ENCODE measurements at regions of chr16 and their contacts with region 1.

Region 1: DNA sequence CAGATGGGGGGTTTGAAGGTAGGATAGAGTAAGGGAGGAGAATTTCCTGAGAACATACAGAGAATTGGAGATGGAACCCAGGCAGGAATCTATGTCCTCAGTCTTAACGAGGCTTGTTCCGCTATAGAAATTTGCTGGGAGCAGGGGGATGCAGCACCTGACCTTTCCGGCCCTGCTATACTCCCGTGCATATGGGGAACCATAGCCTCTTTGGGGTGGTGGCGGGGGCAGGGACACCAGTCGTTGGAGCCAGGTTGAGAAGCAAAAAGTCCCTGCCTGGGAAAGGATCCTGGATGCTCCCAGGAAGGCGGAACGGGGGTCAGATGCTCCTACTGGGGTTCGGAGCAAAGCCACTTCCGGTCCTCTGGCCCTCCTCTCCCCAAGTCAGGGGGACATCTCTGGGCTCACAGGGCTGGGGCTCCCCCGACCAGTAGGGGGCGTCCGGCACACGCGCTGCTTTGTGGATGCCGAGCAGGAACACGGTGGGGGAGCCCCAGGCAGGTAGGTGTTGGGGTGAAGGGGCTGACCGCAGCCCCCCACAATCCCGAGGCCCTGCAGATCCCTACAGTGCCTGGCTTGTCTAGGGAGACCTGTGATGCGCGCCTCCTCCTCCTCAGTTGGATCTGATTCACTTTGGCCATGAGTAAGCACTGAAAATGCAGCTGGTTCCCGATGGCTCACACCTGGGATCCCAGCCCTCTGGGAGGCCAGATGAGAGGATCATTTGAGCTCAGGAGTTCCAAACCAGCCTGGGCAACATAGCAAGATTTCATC is 15.5 kb upstream of the TFAP4 start:
- DNase-seq: peak; percentile 56 to 91 (median 84)
- ATAC-seq: peak; percentile 99
- H3K4me3 ChIP-seq: no peak overlapping the region
- H3K4me3 Mint-ChIP-seq: no peak overlapping the region
- H3K27ac ChIP-seq: no peak overlapping the region
- H3K27ac Mint-ChIP-seq: no peak overlapping the region
- H3K4me1 ChIP-seq: peaks cover 8% of the 10 kb centered on the region
- H3K4me1 Mint-ChIP-seq: peaks cover 13% of the 10 kb centered on the region
- H3K27me3 ChIP-seq: peaks cover 0 to 3% of the 10 kb centered on the region in 2 experiments
- H3K27me3 Mint-ChIP-seq: peaks cover 12% of the 10 kb centered on the region
- CTCF ChIP-seq: peak; percentile 95

Region 2: DNA sequence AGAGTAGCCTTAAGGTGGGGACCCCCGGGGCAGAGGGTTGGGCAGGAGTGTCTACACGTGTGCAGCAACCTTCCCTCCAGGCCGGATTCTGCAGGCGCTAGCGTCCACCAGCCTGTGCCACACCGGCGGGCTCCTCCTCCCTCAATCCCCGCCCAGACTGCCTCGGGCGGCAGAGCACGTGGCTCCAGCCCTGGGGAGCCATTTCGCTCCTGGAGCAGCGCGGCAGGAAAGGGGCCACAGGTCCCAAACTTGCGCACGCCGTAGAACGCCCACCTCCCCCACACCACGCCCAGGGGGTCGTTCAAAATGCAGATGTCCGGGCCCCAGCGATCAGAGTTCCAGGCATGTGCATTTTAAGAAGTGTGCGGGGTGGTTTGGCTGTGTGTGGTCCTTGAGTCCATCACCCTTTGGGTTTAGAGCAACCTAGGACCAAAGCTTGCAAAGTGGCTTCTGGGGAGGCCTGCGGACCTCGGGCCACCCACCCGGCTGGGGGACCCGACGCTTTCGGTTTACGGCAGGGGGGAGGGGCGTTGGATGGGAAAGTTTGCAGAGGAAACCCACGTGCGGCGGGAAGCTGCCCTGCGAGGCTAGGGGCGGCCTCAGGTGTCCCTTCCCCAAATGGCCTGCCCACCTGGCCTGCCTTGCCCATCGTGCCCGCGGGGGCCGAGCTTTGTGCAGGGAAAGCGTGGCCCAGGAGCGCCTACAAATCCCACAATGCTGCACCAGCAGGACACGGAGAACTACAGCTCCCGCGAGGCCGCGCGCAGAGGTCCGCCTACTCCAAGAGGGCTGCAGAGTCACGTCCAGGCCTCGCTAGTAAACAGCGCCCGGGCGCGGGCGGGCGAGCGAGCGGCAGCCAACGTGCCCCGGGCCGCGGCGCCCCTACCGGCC is 16.9 kb before region 1 on chr16:
- CTCF ChIA-PET with region 1: interaction called, 12 read pairs
- POLR2A ChIA-PET with region 1: interaction called, 6 read pairs
- intact Hi-C with region 1: loop called in 1 of 2 experiments (anchors 2 kb)
- DNase-seq: peak; percentile 72 to 93 (median 89)
- ATAC-seq: peak; percentile 84
- H3K4me3 ChIP-seq: peak overlapping the region; percentile 91 to 99
- H3K4me3 Mint-ChIP-seq: peak overlapping the region; percentile 88
- H3K27ac ChIP-seq: peak overlapping the region; percentile 50 to 76
- H3K27ac Mint-ChIP-seq: peak overlapping the region; percentile 57
- H3K4me1 ChIP-seq: peaks cover 13% of the 10 kb centered on the region
- H3K4me1 Mint-ChIP-seq: peaks cover 15% of the 10 kb centered on the region
- H3K27me3 ChIP-seq: no peaks in the 10 kb centered on the region
- H3K27me3 Mint-ChIP-seq: no peaks in the 10 kb centered on the region
- CTCF ChIP-seq: no peak

Region 3: DNA sequence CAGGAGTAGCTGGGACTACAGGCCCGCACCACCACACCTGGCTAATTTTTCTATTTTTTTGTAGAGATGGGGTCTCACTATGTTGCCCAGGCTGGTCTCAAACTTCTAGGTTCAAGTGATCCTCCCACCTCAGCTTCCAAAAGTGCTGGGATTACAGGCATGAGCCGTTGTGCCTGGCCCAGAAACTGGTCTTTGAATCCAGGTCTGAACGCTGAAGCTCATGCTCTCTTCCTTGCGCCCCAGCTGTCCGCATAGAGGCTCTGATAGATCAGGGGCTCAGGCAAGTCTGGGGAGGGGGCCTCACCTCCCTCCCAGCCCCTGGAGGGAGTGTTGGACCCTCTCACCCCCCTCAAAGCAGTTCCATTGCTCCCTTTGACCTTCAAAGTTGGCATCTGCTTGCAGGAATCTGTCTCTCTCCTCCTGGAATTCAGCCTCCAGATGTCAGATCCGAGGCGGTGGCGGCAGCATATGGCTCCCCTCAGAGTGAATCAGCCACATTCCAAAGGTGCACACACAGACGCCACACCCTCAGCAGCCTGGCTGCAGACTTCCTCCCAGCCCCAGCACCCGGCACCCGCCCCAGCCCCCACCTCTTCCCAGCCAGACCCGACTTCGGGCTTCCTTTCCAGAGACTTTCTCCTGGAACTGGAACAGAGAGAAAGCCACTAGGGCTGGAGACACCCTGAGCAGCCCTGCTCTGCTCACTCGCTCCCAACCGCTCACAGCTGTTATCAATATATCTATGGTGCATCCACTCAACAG is 10.6 kb after region 1 on chr16:
- CTCF ChIA-PET with region 1: interaction called, 21 read pairs
- POLR2A ChIA-PET with region 1: interaction called, 3 read pairs
- intact Hi-C with region 1: no loop called
- DNase-seq: no peak
- ATAC-seq: no peak
- H3K4me3 ChIP-seq: no peak overlapping the region
- H3K4me3 Mint-ChIP-seq: no peak overlapping the region
- H3K27ac ChIP-seq: no peak overlapping the region
- H3K27ac Mint-ChIP-seq: no peak overlapping the region
- H3K4me1 ChIP-seq: peaks cover 2% of the 10 kb centered on the region
- H3K4me1 Mint-ChIP-seq: peaks cover 2% of the 10 kb centered on the region
- H3K27me3 ChIP-seq: no peaks in the 10 kb centered on the region
- H3K27me3 Mint-ChIP-seq: no peaks in the 10 kb centered on the region
- CTCF ChIP-seq: no peak

Region 4: DNA sequence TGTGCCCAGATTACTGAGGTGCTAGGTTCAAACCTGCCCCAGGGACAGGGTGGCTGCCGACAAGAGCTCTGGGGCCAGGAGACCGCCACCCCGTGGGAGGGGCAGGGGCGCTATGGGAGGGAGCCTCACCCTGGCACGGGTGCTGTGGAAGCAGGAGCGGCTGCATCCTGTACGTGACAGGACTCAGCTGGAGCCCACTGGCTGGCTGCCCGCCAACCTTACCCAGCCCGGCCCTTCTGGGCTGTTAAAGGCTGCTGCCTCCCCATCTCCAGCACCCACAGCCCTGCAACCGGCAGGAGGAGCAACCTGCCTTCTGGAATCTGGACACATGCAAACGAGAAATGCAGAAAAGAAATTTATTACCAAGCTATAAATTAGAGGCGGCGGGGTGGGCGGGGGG is 51.6 kb after region 1 on chr16:
- CTCF ChIA-PET with region 1: interaction called, 169 read pairs
- POLR2A ChIA-PET with region 1: no interaction called
- intact Hi-C with region 1: no loop called
- DNase-seq: peak in 1 of 9 experiments; percentile 5
- ATAC-seq: no peak
- H3K4me3 ChIP-seq: no peak overlapping the region
- H3K4me3 Mint-ChIP-seq: no peak overlapping the region
- H3K27ac ChIP-seq: no peak overlapping the region
- H3K27ac Mint-ChIP-seq: no peak overlapping the region
- H3K4me1 ChIP-seq: no peaks in the 10 kb centered on the region
- H3K4me1 Mint-ChIP-seq: peaks cover 11% of the 10 kb centered on the region
- H3K27me3 ChIP-seq: no peaks in the 10 kb centered on the region
- H3K27me3 Mint-ChIP-seq: no peaks in the 10 kb centered on the region
- CTCF ChIP-seq: no peak

Region 5: GRCh38 chr16:4544473-4544872 is 256.1 kb after region 1 on chr16:
- CTCF ChIA-PET with region 1: no interaction called
- POLR2A ChIA-PET with region 1: no interaction called
- intact Hi-C with region 1: loop called in 1 of 2 experiments (anchors 5 kb)
- DNase-seq: no peak
- ATAC-seq: no peak
- H3K4me3 ChIP-seq: no peak overlapping the region
- H3K4me3 Mint-ChIP-seq: no peak overlapping the region
- H3K27ac ChIP-seq: no peak overlapping the region
- H3K27ac Mint-ChIP-seq: no peak overlapping the region
- H3K4me1 ChIP-seq: peaks cover 9% of the 10 kb centered on the region
- H3K4me1 Mint-ChIP-seq: peaks cover 3% of the 10 kb centered on the region
- H3K27me3 ChIP-seq: no peaks in the 10 kb centered on the region
- H3K27me3 Mint-ChIP-seq: no peaks in the 10 kb centered on the region
- CTCF ChIP-seq: no peak

Region 6: DNA sequence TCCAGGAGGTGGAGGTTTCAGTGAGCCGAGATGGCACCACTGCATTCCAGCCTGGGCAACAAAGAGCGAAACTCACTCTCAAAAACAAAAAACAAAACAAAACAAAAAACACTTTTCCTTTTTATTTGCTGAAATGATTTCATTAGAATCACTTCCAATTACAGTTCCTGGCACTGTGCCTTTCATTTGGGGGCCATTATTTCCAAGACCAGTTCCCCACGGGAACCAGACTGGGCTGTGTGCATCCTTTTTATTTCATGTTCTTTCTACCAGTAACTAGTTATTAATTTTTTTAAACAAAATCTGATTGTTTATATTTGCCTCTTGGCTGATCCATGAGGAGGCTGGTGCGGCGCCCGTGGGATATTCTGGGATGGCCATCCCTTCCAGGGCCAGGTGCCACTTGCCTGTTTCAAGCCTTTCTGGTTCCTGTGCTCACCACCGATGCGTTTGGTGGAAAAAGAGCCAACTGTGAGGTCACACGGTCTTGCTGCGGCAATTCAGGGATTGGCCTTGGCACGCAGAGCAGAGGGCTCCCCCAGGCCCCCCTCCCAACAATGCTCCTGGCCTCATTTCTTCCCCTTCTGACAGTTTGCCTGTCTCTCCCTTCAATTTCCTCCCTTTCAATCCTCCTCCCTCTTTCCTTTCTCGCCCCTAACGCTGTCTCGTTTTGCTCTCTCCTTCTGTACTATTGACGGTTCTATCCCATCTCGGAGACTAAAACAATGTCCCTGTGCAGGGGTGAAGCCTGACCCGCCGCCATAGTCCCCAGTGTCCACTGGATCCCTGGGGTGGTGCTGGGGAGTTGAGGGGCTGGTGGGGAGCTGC is 312.9 kb after region 1 on chr16:
- CTCF ChIA-PET with region 1: no interaction called
- POLR2A ChIA-PET with region 1: no interaction called
- intact Hi-C with region 1: no loop called
- DNase-seq: no peak
- ATAC-seq: no peak
- H3K4me3 ChIP-seq: no peak overlapping the region
- H3K4me3 Mint-ChIP-seq: no peak overlapping the region
- H3K27ac ChIP-seq: no peak overlapping the region
- H3K27ac Mint-ChIP-seq: no peak overlapping the region
- H3K4me1 ChIP-seq: no peaks in the 10 kb centered on the region
- H3K4me1 Mint-ChIP-seq: no peaks in the 10 kb centered on the region
- H3K27me3 ChIP-seq: no peaks in the 10 kb centered on the region
- H3K27me3 Mint-ChIP-seq: peaks cover 2% of the 10 kb centered on the region
- CTCF ChIP-seq: no peak